Dorsolateral prefrontal cortex (tissue), 120 donors: ENCODE measurements at regions of chr16 and their contacts with region 1.

Region 1: DNA sequence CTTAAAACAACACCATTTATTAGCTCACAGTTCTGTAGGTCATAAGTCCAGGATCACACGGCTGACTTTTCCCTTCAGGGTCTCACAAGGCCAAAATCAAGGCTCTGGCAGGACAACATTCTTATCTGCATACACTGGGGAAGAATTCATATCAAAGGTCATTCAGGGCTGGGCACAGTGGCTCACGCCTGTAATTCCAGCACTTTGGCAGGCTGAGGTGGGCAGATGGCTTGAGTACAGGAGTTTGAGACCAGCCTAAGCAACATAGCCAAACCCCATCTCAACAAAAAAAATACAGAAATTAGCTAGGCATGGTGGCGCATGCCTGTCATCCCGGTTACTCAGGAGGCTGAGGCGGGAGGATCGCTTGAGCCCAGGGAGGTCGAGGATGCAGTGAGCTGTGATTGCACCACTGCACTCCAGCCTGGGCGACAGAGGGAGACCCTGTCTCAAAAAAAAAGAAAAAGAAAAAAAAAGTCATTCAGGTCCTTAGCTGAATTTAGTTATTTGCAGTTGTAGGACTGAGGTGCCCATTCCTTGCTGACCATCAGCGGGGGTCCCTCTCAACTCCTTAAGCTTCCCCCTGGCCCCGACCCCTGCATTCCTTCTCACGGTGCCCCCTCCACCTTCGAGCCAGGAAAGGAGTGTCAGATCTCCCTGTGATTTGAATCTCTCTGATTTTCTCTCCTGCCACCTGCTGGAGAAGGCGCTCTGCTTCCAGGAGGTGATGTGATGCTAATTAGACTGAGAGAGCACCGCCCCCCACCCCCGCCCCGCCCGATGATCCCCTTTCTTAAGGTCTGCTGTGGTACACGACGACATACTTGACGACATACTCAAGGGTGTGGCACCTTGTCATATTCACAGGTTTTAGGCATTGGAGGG is 91.8 kb upstream of the CLEC18A start:
- DNase-seq: peak in 4 of 10 donors; percentile 36 to 67 (median 60)
- H3K4me3 ChIP-seq: no peak overlapping the region
- H3K27ac ChIP-seq: peak overlapping the region in 38 of 59 donors; percentile 9 to 83 (median 56)
- H3K27me3 ChIP-seq: no peaks in the 10 kb centered on the region
- CTCF ChIP-seq: peak in 54 of 56 donors; percentile 26 to 73 (median 46)

Region 2: GRCh38 chr16:69930117-69930776 is 70.9 kb after region 1 on chr16:
- intact Hi-C with region 1: loop called in 1 of 2 experiments (anchors 10 kb)
- DNase-seq: peak in 2 of 10 donors; percentile 37 to 46
- H3K4me3 ChIP-seq: no peak overlapping the region
- H3K27ac ChIP-seq: peak overlapping the region in 41 of 59 donors; percentile 7 to 95 (median 58)
- H3K27me3 ChIP-seq: no peaks in the 10 kb centered on the region
- CTCF ChIP-seq: peak; percentile 44 to 84 (median 73)